A549 (cell line): ENCODE measurements at regions of chr2 and their contacts with region 1.

Region 1: GRCh38 chr2:178775975-178776374 is 31.2 kb downstream of the TTN start:
- DNase-seq: no peak
- ATAC-seq: no peak
- H3K4me3 ChIP-seq: no peak overlapping the region
- H3K27ac ChIP-seq: no peak overlapping the region
- H3K4me1 ChIP-seq: no peaks in the 10 kb centered on the region
- CTCF ChIP-seq: no peak
- EP300 ChIP-seq: no peak
- POLR2A ChIP-seq: no peak
- RAD21 ChIP-seq: no peak

Region 2: GRCh38 chr2:178747767-178748166 is 28.2 kb before region 1 on chr2:
- CTCF ChIA-PET with region 1: no interaction called
- POLR2A ChIA-PET with region 1: no interaction called
- DNase-seq: no peak
- ATAC-seq: no peak
- H3K4me3 ChIP-seq: no peak overlapping the region
- H3K27ac ChIP-seq: no peak overlapping the region
- H3K4me1 ChIP-seq: no peaks in the 10 kb centered on the region
- CTCF ChIP-seq: no peak
- EP300 ChIP-seq: no peak
- POLR2A ChIP-seq: no peak
- RAD21 ChIP-seq: no peak

Region 3: GRCh38 chr2:178761759-178762371 is 14.1 kb before region 1 on chr2:
- CTCF ChIA-PET with region 1: interaction called, 11 read pairs
- POLR2A ChIA-PET with region 1: no interaction called
- DNase-seq: peak; percentile 6 to 58
- ATAC-seq: peak; percentile 67 to 80; a peak in 5 of 6 replicates
- H3K4me3 ChIP-seq: no peak overlapping the region
- H3K27ac ChIP-seq: no peak overlapping the region
- H3K4me1 ChIP-seq: no peaks in the 10 kb centered on the region
- CTCF ChIP-seq: peak; percentile 81
- EP300 ChIP-seq: no peak
- POLR2A ChIP-seq: no peak
- RAD21 ChIP-seq: peak; percentile 80 to 83

Region 4: DNA sequence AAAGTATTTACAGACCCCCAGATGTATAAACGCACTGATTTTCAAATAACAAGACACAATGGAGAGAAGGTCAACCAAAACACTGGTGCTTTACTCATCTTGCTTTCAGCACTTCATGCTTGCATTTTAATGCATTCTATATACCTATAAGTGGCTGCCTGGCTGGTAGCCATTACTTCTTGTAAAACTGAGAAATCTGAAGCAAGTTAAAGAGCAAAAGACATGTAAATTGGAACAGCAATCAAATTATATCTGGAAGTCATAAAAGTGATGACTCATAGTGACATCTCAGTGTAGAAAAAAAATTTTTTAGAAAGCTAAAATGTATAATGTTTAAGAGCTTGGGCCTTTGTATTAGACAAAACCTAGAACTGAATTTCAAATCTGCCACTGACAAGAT is 167.8 kb after region 1 on chr2:
- CTCF ChIA-PET with region 1: no interaction called
- POLR2A ChIA-PET with region 1: no interaction called
- DNase-seq: no peak
- ATAC-seq: no peak
- H3K4me3 ChIP-seq: no peak overlapping the region
- H3K27ac ChIP-seq: no peak overlapping the region
- H3K4me1 ChIP-seq: no peaks in the 10 kb centered on the region
- CTCF ChIP-seq: no peak
- EP300 ChIP-seq: no peak
- POLR2A ChIP-seq: no peak
- RAD21 ChIP-seq: no peak